GM12878 (cell line): ENCODE measurements at regions of chr16 and their contacts with region 1.

Region 1: GRCh38 chr16:50121721-50122445 is 31.2 kb upstream of the TENT4B start:
- DNase-seq: peak; percentile 72
- ATAC-seq: peak; percentile 82
- H3K4me3 ChIP-seq: peak overlapping the region; percentile 16; the same call in 1 of the 2 replicates
- H3K27ac ChIP-seq: peak overlapping the region; percentile 75
- H3K4me1 ChIP-seq: peaks cover 32% of the 10 kb centered on the region
- H3K27me3 ChIP-seq: no peaks in the 10 kb centered on the region
- CTCF ChIP-seq: no peak
- EP300 ChIP-seq: peak; percentile 56 to 85; a peak in 3 of 4 replicates
- POLR2A ChIP-seq: no peak
- RAD21 ChIP-seq: no peak

Region 2: DNA sequence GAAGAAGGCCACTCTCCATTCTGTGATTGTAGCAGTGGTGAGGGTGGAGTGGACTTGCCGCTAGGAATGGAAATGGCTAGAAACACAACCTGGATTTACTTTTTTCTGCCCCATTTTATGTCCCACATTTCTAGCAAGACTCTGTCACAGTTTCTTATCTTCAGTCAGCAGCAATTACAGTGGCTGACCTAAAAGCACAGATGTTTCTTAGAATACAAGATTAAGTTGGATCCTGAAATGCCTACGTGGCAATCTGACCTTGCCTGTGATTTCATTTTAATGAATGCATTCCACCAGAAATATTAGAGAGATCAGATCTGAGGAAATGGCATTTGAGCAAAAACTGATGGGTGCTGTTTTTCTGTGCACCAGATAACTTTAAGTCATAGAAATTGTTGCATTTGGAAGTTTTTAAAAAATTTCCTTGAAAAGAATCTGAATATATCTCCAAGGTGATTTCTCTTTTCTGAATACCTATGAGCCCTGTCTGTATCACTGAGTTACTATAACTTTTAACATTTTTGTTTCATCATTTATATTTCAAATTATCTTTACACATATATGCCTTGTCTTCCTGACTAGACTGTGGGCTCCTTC is 50.7 kb before region 1 on chr16:
- CTCF ChIA-PET with region 1: interaction called, 22 read pairs
- POLR2A ChIA-PET with region 1: interaction called, 4 read pairs
- RAD21 ChIA-PET with region 1: interaction called, 25 read pairs
- SMC1A ChIA-PET with region 1: interaction called, 18 read pairs
- in situ Hi-C with region 1: no loop called
- intact Hi-C with region 1: loop called (anchors 2 kb)
- DNase-seq: no peak
- ATAC-seq: no peak
- H3K4me3 ChIP-seq: no peak overlapping the region
- H3K27ac ChIP-seq: no peak overlapping the region
- H3K4me1 ChIP-seq: peaks cover 22% of the 10 kb centered on the region
- H3K27me3 ChIP-seq: no peaks in the 10 kb centered on the region
- CTCF ChIP-seq: no peak
- EP300 ChIP-seq: no peak
- POLR2A ChIP-seq: no peak
- RAD21 ChIP-seq: no peak

Region 3: DNA sequence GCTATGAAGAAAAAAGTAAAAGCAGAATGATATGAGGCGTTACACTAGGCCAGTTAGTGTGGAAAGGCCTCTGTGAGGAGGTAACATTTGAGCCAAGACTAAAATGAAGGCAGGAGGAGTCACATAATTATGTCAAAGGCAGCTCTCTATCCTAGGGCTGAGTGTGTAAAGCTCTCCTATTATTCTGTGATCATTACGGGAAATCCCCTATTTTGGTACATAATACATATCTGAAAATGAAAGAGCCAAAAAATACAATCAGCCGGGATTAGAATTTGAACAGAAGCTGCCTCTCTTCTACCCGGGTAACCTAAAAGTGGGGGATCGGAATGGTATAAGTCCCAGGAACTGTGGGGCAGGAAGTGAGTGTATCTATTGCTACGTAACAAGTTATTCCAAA is 29.0 kb before region 1 on chr16:
- CTCF ChIA-PET with region 1: interaction called, 4 read pairs
- POLR2A ChIA-PET with region 1: interaction called, 4 read pairs
- RAD21 ChIA-PET with region 1: no interaction called
- SMC1A ChIA-PET with region 1: interaction called, 10 read pairs
- in situ Hi-C with region 1: no loop called
- intact Hi-C with region 1: no loop called
- DNase-seq: no peak
- ATAC-seq: no peak
- H3K4me3 ChIP-seq: no peak overlapping the region
- H3K27ac ChIP-seq: no peak overlapping the region
- H3K4me1 ChIP-seq: peaks cover 3% of the 10 kb centered on the region; the same call in 1 of the 2 replicates
- H3K27me3 ChIP-seq: no peaks in the 10 kb centered on the region
- CTCF ChIP-seq: no peak
- EP300 ChIP-seq: no peak
- POLR2A ChIP-seq: no peak
- RAD21 ChIP-seq: no peak

Region 4: DNA sequence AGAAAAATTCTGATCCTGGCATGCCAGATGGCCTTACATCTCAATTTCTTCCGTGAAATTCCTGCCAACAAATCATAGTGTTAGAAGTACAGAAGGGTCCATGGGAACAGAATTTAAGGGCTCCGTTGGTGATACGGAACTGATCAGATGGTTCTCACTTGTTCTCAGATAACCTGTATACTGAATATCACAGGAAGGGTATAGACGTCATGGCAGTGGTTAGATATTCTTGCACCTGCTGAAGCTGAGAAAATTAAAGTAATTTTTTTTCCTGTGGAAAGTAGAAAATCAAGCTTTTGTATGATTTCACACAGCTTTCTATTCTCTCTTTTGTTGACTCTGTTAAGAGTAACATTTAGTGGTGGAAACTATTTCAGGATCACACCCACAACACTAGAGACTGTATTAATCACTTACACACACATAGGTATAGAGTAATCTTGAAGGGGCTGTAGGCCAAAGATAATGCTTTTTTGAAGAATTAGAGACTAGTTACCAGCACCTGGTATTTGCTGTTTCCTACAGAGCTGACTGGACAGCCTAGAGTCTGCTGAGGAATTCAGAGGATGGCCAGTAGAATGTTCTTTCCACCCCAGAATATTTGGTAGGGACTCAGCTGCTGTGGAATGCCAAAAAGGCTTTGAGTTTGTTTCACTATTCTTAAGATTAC is 38.7 kb after region 1 on chr16:
- CTCF ChIA-PET with region 1: interaction called, 4 read pairs
- POLR2A ChIA-PET with region 1: interaction called, 8 read pairs
- RAD21 ChIA-PET with region 1: interaction called, 3 read pairs
- SMC1A ChIA-PET with region 1: interaction called, 10 read pairs
- in situ Hi-C with region 1: no loop called
- intact Hi-C with region 1: no loop called
- DNase-seq: no peak
- ATAC-seq: peak; percentile 59
- H3K4me3 ChIP-seq: peak overlapping the region; percentile 9; the same call in 1 of the 2 replicates
- H3K27ac ChIP-seq: no peak overlapping the region
- H3K4me1 ChIP-seq: peaks cover 8% of the 10 kb centered on the region; the same call in 1 of the 2 replicates
- H3K27me3 ChIP-seq: no peaks in the 10 kb centered on the region
- CTCF ChIP-seq: no peak
- EP300 ChIP-seq: 0 out of 4 replicates have a peak, but pooled peaks of 1 of the 2 experiments have one; percentile 38
- POLR2A ChIP-seq: no peak
- RAD21 ChIP-seq: no peak